Cardiac septum (tissue), 1 donor: ENCODE measurements at regions of chr16 and their contacts with region 1.

Region 1: DNA sequence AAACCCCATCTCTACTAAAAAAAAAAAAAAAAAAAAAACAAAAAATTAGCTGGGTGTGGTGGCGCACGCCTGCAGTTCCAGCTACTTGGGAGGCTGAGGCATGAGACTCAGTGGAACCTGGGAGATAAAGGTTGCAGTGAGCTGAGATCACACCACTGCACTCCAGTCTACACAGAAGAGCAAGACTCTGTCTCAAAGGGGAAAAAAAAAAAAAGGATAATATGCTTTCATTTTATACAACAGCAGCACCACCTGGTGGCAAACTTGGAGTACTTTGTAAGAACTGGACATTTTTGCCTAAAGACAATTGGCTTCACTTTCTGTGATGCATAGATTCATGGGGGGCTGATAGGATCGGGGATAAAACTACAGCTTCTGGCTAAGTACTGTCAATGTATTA is 8.5 kb downstream of the CHTF8 start:
- DNase-seq: no peak

Region 2: GRCh38 chr16:68538880-68539701 is 584.8 kb before region 1 on chr16 and contains the start of gene ZFP90:
- intact Hi-C with region 1: loop called (anchors 10 kb)
- DNase-seq: peak; percentile 91
- total RNA-seq, gene ZFP90: 16.0 TPM

Region 3: DNA sequence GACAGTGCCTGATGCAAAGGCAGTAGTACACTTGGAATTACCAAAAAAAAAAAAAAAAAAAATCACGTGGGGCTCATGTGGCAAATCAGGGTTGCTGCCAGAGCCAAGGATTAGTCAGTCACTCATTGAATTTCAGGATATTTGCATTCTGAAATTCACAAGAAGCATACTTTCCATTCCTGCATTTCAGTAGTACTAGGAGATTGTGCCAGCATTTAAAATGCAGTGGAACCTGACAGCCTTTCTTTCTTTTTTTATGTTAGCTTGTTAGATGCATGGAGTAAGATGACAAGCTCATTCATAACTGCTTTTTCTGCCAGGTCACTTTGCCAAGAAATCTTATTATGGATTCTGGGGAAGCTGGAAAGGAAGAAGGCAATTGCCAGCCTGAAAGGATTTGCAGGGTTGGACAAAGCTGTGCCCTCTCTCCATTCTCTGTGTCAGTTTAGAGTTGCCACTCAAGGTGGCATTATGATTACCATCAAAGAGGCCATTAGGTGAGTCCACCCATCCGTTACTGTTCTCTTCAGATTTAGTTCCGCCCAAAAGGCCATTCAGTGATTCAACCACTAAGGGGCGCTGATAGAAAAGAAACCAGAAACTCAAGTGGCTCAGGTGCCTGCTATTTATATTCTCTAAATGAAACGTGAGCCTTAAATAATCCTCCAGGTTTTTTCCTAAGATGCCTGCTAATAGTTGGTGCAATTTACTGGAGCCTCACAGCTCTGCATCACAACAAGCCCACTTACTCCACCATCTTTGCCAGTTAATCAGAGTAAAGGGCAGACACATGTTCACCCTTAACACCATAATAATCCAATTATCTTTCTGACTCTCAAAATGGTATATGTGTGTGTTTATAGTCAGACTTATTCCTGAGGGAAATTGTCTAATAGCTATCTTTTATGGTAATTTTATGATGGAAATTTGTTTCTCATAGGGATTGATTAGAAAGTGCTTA is 221.6 kb before region 1 on chr16:
- intact Hi-C with region 1: loop called (anchors 2 kb)
- DNase-seq: no peak

Region 4: GRCh38 chr16:69179328-69180010 is 55.6 kb after region 1 on chr16:
- intact Hi-C with region 1: no loop called
- DNase-seq: peak; percentile 77